ENCODE measurements at regions of chr1 and their contacts with region 1.

Region 1: GRCh38 chr1:15152318-15153183 is 996 bp upstream of the TMEM51 start:
- DNase-seq: no peak
- H3K4me3 ChIP-seq: peak overlapping the region; percentile 41
- H3K27me3 ChIP-seq: peaks cover 11% of the 10 kb centered on the region
- CTCF ChIP-seq: peak; percentile 81

Region 2: GRCh38 chr1:15141935-15142539 is 10.5 kb before region 1 on chr1:
- CTCF ChIA-PET with region 1: interaction called, 24 read pairs
- POLR2A ChIA-PET with region 1: no interaction called
- DNase-seq: no peak
- H3K4me3 ChIP-seq: no peak overlapping the region
- H3K27me3 ChIP-seq: peaks cover 5% of the 10 kb centered on the region
- CTCF ChIP-seq: no peak